Activated naive CD4-positive, alpha-beta T cell treated with anti-CD3 and anti-CD28 coated beads for 36 hours (primary cell): ENCODE measurements at regions of chr1 and their contacts with region 1.

Region 1: DNA sequence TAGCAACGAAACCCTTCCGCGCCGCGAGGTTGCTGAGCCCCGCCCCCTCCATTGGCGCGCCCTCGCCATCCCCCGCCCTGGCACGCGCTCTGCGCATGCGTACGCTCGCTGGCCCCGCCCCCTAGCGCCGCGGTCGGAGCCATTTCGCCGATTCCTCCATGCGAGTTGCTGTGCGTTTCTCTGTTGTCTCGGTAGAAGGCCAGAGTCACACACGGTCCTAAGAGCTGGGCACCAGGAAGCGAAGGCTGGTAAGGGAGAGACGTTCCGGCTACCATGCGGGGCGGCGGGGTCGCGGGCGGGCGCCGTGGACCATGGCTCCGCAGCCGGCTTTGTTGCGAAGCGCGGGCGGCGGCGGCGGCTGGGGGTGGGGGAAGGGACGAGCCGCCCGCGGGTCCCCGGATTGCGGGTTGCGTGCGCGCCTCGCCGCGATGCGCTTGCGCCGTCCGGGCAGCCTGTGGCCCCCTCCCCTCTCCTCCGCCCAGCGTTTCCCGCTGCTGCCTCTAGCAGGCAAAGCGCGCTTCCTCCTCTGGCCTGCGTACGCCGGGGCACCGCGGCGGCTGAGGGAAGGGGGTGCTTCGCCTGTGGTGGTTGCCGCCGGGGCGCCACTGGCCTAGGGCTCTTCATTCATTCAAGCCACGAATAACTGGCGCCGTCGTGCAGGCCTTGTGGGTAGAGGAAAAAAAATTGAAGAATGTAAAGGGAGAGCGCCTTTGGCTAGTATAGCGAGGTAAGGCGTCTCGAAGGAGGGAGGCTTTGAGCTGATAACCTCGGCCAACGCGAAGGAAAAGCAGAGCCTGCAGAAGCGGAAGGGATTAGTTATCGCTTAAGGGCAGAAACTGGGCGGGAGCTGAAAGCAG is at the start of gene DHX9:
- DNase-seq: peak; percentile 94
- H3K4me3 Mint-ChIP-seq: peak within 1 kb of the TSS; percentile 90
- H3K27ac Mint-ChIP-seq: peak within 1 kb of the TSS; percentile 95
- H3K4me1 Mint-ChIP-seq: peaks cover 44% of the 10 kb centered on the region
- H3K27me3 Mint-ChIP-seq: no peaks in the 10 kb centered on the region
- total RNA-seq, gene DHX9: 194 TPM

Region 2: DNA sequence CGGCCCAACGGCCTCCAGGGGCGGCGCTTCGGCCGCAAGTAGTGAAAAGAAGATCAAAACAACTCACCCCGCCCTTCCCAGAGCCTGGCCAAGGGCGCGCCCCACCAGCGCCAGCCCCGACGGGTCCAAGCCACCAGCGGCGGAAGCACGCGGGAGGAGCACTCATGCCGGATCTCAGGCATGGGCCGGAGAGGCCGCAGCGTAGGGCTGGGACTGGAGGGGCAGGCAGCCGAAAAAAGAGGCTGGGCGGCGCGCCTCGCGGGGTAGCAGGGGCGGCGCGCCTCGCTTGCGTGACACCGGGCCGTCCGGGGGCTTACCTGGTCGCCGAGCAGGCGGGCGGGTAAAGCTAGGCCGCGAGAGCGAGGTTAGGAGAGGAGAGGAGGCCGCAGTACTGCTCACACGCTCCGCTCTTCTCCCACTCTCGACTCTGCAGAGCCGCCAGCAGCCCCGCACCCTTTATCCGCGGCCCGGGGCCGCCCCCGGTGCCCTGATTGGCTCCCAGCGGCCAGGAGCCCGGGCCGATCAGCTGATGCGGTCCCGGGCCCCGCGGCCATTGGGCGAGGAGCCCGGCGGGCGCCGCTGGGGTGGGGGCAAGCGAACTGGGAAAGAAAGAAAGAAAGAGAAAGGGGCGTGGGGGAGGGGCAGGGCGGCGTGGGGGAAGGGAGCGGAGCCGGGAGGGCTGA is 447.9 kb before region 1 on chr1 and contains the start of gene GLUL:
- CTCF ChIA-PET with region 1: no interaction called
- intact Hi-C with region 1: loop called (anchors 2 kb)
- DNase-seq: peak; percentile 76
- H3K4me3 Mint-ChIP-seq: peak within 1 kb of the TSS; percentile 87
- H3K27ac Mint-ChIP-seq: peak within 1 kb of the TSS; percentile 72
- H3K4me1 Mint-ChIP-seq: peaks cover 18% of the 10 kb centered on the region
- H3K27me3 Mint-ChIP-seq: no peaks in the 10 kb centered on the region
- total RNA-seq, gene GLUL: 71.5 to 73.1 TPM

Region 3: GRCh38 chr1:182604169-182605164 is 235.0 kb before region 1 on chr1 and contains the start of gene RGS16:
- CTCF ChIA-PET with region 1: interaction called, 3 read pairs
- intact Hi-C with region 1: loop called (anchors 2 kb)
- DNase-seq: peak; percentile 97
- H3K4me3 Mint-ChIP-seq: no peak within 1 kb of the TSS
- H3K27ac Mint-ChIP-seq: no peak within 1 kb of the TSS
- H3K4me1 Mint-ChIP-seq: peaks cover 45% of the 10 kb centered on the region
- H3K27me3 Mint-ChIP-seq: no peaks in the 10 kb centered on the region
- total RNA-seq, gene RGS16: 35.3 to 37.3 TPM

Region 4: GRCh38 chr1:182716740-182717720 is 122.4 kb before region 1 on chr1:
- CTCF ChIA-PET with region 1: no interaction called
- intact Hi-C with region 1: loop called (anchors 5 kb)
- DNase-seq: no peak
- H3K4me3 Mint-ChIP-seq: no peak overlapping the region
- H3K27ac Mint-ChIP-seq: no peak overlapping the region
- H3K4me1 Mint-ChIP-seq: peaks cover 40% of the 10 kb centered on the region
- H3K27me3 Mint-ChIP-seq: no peaks in the 10 kb centered on the region

Region 5: DNA sequence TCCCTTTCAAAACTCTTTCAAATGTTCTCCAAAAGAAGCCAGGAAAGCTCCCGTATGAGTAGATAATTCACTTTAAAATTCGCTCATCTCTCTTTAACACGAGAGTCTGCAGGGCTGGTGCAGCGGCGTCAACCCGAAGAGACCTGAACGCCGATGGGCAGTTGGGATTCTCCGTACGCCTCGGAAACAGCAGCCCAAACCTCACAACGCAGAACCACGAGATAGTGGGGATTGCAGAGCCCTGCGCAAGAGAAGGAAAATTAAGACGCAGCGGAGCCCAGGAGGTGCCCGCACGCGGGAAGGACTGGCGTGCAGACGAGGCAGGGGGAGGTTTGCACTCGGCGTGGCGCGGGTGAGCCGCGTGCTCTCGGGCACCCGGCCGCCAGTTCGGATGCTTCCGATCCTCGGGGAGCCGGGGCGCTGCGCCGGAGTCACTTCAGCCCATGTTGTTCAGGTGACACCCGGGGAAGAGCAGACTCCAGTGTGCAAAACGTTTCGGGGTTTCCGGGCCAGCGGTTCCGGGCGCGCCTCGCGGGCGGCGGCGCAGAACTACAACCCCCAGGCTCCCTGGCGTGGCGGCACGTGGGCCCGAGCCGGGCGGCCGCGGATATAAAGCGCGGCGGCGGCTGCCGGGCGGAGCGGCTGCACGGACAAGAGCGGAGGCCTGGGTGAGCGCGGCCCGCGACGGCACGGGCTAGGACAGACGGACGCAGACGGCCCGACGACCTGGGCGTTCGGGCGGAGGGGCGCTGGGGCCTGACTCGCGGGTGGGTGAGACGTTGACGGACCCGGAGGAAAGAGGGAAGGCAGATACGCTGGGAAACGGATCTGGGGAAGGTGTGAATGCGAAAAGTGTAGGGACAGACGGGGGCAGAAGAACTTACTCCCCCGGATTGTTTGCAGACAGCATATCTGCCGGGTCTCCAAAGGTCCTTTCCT is 50.0 kb before region 1 on chr1 and contains the start of gene NPL:
- CTCF ChIA-PET with region 1: interaction called, 6 read pairs
- intact Hi-C with region 1: loop called (anchors 1 kb)
- DNase-seq: peak; percentile 85
- H3K4me3 Mint-ChIP-seq: peak within 1 kb of the TSS; percentile 81
- H3K27ac Mint-ChIP-seq: peak within 1 kb of the TSS; percentile 22
- H3K4me1 Mint-ChIP-seq: peaks cover 13% of the 10 kb centered on the region
- H3K27me3 Mint-ChIP-seq: no peaks in the 10 kb centered on the region
- total RNA-seq, gene NPL: 4.6 to 5.9 TPM

Region 6: DNA sequence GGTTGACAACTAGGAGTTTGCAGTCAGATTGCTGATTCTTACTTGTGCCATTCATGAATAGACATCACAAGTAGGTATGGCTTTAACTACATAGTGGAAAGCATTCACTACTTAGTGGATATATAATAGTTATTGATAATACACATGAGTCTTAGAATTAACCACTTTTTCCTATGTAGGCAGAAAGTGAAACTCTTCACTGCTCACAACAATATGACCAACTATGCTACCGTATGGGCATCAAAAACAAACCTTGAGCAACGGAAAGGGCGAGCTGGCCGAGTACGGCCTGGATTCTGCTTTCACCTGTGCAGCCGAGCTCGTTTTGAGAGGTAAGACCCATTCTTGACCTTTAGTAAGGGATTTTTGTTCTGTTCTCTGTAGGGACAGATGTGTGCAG is 38.4 kb after region 1 on chr1:
- CTCF ChIA-PET with region 1: no interaction called
- intact Hi-C with region 1: loop called (anchors 5 kb)
- DNase-seq: no peak
- H3K4me3 Mint-ChIP-seq: no peak overlapping the region
- H3K27ac Mint-ChIP-seq: peak overlapping the region; percentile 50
- H3K4me1 Mint-ChIP-seq: peaks cover 28% of the 10 kb centered on the region
- H3K27me3 Mint-ChIP-seq: no peaks in the 10 kb centered on the region